Adrenal gland (tissue), 19 donors: ENCODE measurements at regions of chr2 and their contacts with region 1.

Region 1: DNA sequence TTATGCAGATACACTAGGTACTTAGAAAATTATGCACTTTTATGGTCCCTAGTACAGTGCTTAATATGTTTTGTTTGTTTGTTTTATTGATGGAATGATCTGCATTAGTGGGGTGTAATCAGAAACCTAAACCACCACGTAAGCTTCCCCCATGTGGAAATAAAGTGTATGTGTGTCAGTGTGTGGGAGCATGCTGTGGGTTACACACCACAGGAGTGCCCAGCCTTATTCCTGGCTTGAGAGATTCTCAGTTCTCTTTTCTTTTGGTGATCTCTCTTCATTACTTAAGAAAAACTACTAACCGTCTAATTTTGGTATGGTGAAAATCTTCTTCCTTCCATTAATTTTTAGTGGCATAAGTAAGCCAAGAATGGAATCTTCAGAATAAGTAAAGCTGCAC is 398.6 kb downstream of the DCDC2C start:
- DNase-seq: no peak
- H3K4me3 ChIP-seq: no peak overlapping the region
- H3K27ac ChIP-seq: no peak overlapping the region
- H3K4me1 ChIP-seq: no peaks in the 10 kb centered on the region
- H3K27me3 ChIP-seq: no peaks in the 10 kb centered on the region
- CTCF ChIP-seq: no peak
- POLR2A ChIP-seq: no peak

Region 2: DNA sequence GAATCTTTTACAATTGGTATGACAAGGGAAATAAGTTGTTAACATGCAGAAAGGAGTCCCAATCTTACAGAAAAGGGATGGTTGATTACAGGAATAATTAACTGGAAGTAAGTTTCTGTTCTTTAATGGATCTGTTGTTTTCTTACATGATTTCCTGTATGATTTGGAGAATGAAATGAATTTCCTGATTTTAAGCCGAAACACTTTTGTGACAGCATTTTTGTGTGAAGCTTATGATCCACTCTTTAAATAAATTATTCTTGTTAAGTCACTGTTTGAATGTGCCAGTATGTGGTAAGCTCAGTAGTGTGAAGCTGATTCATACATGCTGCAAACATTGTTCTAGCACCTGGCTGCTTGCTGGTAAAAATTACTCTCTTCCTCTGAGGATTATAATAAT is 117.6 kb after region 1 on chr2:
- intact Hi-C with region 1: no loop called
- DNase-seq: no peak
- H3K4me3 ChIP-seq: no peak overlapping the region
- H3K27ac ChIP-seq: no peak overlapping the region
- H3K4me1 ChIP-seq: no peaks in the 10 kb centered on the region
- H3K27me3 ChIP-seq: no peaks in the 10 kb centered on the region
- CTCF ChIP-seq: no peak
- POLR2A ChIP-seq: no peak

Region 3: DNA sequence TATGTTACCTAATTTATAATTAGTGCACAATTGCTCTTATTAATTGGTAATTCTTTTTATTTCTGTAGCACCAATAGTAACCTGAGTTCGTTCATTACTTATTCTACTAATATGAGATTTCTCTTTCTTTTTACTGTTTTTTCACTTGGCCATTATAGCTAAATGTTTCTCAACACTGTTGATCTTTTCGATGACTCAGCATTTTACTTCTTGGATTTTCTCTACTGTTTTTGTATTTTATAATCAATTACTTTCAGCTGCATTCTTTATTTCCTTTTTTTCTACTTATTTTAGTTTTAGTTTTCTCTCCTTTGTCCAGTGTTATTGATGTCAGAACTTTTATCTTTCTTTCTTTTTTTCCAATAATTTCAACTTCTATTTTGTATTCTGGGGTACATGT is 1000.9 kb after region 1 on chr2:
- intact Hi-C with region 1: loop called in 1 of 2 experiments (anchors 10 kb)
- DNase-seq: no peak
- H3K4me3 ChIP-seq: no peak overlapping the region
- H3K27ac ChIP-seq: no peak overlapping the region
- H3K4me1 ChIP-seq: no peaks in the 10 kb centered on the region
- H3K27me3 ChIP-seq: no peaks in the 10 kb centered on the region
- CTCF ChIP-seq: no peak
- POLR2A ChIP-seq: no peak